ENCODE measurements at regions of chr14 and their contacts with region 1.

Region 1: GRCh38 chr14:102279688-102280348 is 25.1 kb downstream of the MOK start:
- DNase-seq: no peak
- ATAC-seq: no peak
- H3K4me3 ChIP-seq: no peak overlapping the region
- H3K4me3 Mint-ChIP-seq: no peak overlapping the region
- H3K27ac ChIP-seq: no peak overlapping the region
- H3K27ac Mint-ChIP-seq: no peak overlapping the region
- H3K4me1 ChIP-seq: no peaks in the 10 kb centered on the region
- H3K4me1 Mint-ChIP-seq: no peaks in the 10 kb centered on the region
- H3K27me3 ChIP-seq: no peaks in the 10 kb centered on the region
- H3K27me3 Mint-ChIP-seq: no peaks in the 10 kb centered on the region

Region 2: DNA sequence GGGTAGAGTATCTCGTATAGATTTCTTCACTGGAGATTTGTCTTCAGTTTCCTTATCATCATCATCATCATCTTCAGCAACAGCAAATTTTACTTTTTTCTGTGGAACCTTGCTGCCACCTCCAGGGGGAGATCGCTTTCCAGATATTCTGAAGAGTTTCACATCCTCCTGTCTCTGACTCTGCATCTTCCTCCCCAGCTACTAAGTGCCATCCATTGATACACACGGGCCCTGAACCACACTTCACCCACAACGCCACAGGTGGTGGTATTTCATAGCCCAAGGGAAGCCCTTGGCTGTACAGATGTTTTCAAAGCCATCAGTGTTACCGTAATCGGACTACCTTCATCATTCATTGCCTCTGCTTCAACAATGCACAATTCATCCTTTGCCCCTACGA is 436.2 kb before region 1 on chr14:
- CTCF ChIA-PET with region 1: no interaction called
- POLR2A ChIA-PET with region 1: no interaction called
- DNase-seq: peak in 33 of 35 experiments; percentile 37 to 83 (median 55)
- ATAC-seq: peak; percentile 59 to 75 (median 70)
- H3K4me3 ChIP-seq: no peak overlapping the region
- H3K4me3 Mint-ChIP-seq: peak overlapping the region; percentile 3 to 29 (median 18)
- H3K27ac ChIP-seq: peak overlapping the region; percentile 55
- H3K27ac Mint-ChIP-seq: peak overlapping the region; percentile 77 to 88
- H3K4me1 ChIP-seq: peaks cover 23 to 79% of the 10 kb centered on the region in 2 experiments
- H3K4me1 Mint-ChIP-seq: peaks cover 93 to 97% (median 94%) of the 10 kb centered on the region in 3 donors
- H3K27me3 ChIP-seq: no peaks in the 10 kb centered on the region
- H3K27me3 Mint-ChIP-seq: no peaks in the 10 kb centered on the region

Region 3: DNA sequence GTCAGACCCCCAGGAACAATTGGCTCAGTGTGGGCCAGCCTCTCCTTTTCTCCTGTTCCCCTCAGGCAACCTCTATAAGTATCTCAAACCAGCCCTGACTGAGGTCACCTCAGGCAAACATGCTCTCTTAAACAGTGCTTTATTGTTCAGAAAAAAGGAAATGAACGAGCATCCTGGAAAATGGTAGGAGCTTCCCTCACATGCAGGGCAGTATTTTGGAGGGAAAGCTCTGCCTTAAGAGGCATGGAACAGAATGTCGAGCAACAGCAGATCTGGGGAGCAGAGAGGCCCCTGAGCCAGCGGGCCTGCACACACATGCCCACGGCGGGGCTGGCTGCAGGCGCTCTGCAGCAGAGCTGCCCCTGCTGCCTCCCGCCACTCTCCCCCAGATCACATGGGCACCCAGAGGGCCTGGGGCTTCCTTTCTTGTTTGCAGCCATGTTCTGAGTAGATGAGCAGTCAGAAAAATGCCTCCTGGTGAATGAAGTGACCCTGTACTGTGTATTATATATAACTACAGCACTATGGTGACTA is 16.8 kb before region 1 on chr14:
- CTCF ChIA-PET with region 1: no interaction called
- POLR2A ChIA-PET with region 1: no interaction called
- DNase-seq: no peak
- ATAC-seq: no peak
- H3K4me3 ChIP-seq: no peak overlapping the region
- H3K4me3 Mint-ChIP-seq: no peak overlapping the region
- H3K27ac ChIP-seq: no peak overlapping the region
- H3K27ac Mint-ChIP-seq: no peak overlapping the region
- H3K4me1 ChIP-seq: no peaks in the 10 kb centered on the region
- H3K4me1 Mint-ChIP-seq: no peaks in the 10 kb centered on the region
- H3K27me3 ChIP-seq: no peaks in the 10 kb centered on the region
- H3K27me3 Mint-ChIP-seq: peaks cover 0 to 2% of the 10 kb centered on the region in 2 donors

Region 4: GRCh38 chr14:102408724-102409123 is 128.9 kb after region 1 on chr14:
- CTCF ChIA-PET with region 1: no interaction called
- POLR2A ChIA-PET with region 1: no interaction called
- DNase-seq: no peak
- ATAC-seq: no peak
- H3K4me3 ChIP-seq: no peak overlapping the region
- H3K4me3 Mint-ChIP-seq: no peak overlapping the region
- H3K27ac ChIP-seq: no peak overlapping the region
- H3K27ac Mint-ChIP-seq: peak overlapping the region in 1 of 2 donors; percentile 16
- H3K4me1 ChIP-seq: no peaks in the 10 kb centered on the region
- H3K4me1 Mint-ChIP-seq: peaks cover 5 to 6% (median 6%) of the 10 kb centered on the region in 3 donors
- H3K27me3 ChIP-seq: no peaks in the 10 kb centered on the region
- H3K27me3 Mint-ChIP-seq: no peaks in the 10 kb centered on the region

Region 5: DNA sequence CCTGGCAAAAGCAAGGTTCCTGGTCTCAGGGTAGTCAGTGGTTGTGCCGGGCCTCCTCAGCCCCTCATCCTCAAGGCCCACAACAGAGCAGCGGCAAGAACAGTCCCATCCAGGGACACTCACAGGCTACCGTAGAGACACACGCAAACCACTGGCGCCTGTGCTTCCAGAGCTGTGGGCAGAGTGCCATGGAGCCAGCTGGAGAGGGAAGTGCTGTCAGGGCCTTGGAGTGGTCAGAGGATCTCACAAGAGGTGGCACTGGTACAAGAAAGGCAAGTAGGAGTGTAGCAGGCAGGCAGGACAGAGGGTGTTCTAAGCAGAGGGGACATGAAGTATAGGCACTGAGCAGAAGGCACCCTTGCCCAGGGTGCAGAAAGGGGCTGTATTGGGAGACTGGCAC is 195.1 kb after region 1 on chr14:
- CTCF ChIA-PET with region 1: interaction called in 1 of 2 experiments, 10 read pairs
- POLR2A ChIA-PET with region 1: no interaction called
- DNase-seq: no peak
- ATAC-seq: no peak
- H3K4me3 ChIP-seq: no peak overlapping the region
- H3K4me3 Mint-ChIP-seq: no peak overlapping the region
- H3K27ac ChIP-seq: no peak overlapping the region
- H3K27ac Mint-ChIP-seq: no peak overlapping the region
- H3K4me1 ChIP-seq: peaks cover 4 to 7% of the 10 kb centered on the region in 2 experiments
- H3K4me1 Mint-ChIP-seq: peaks cover 15 to 20% (median 18%) of the 10 kb centered on the region in 3 donors
- H3K27me3 ChIP-seq: peaks cover 0 to 2% of the 10 kb centered on the region in 2 experiments
- H3K27me3 Mint-ChIP-seq: no peaks in the 10 kb centered on the region

Measured in T-cell (primary cell).